ENCODE measurements at regions of chr6 and their contacts with region 1.

Region 1: GRCh38 chr6:111406200-111406721 is 76.8 kb downstream of the REV3L start:
- DNase-seq: peak; percentile 96
- ATAC-seq: peak; percentile 94
- H3K4me3 ChIP-seq: no peak overlapping the region
- H3K27ac ChIP-seq: peak overlapping the region; percentile 59
- H3K4me1 ChIP-seq: peaks cover 28% of the 10 kb centered on the region
- H3K27me3 ChIP-seq: no peaks in the 10 kb centered on the region
- CTCF ChIP-seq: no peak
- EP300 ChIP-seq: peak; percentile 98 to 100; a peak in 3 of 4 replicates
- POLR2A ChIP-seq: no peak
- RAD21 ChIP-seq: peak; percentile 37; the same call in 1 of the 2 replicates

Region 2: GRCh38 chr6:111388681-111389080 is 17.6 kb before region 1 on chr6:
- CTCF ChIA-PET with region 1: interaction called, 3 read pairs
- POLR2A ChIA-PET with region 1: no interaction called
- RAD21 ChIA-PET with region 1: no interaction called
- SMC1A ChIA-PET with region 1: interaction called, 14 read pairs
- in situ Hi-C with region 1: no loop called
- intact Hi-C with region 1: no loop called
- DNase-seq: no peak
- ATAC-seq: no peak
- H3K4me3 ChIP-seq: no peak overlapping the region
- H3K27ac ChIP-seq: no peak overlapping the region
- H3K4me1 ChIP-seq: no peaks in the 10 kb centered on the region
- H3K27me3 ChIP-seq: no peaks in the 10 kb centered on the region
- CTCF ChIP-seq: no peak
- EP300 ChIP-seq: no peak
- POLR2A ChIP-seq: no peak
- RAD21 ChIP-seq: no peak

Region 3: DNA sequence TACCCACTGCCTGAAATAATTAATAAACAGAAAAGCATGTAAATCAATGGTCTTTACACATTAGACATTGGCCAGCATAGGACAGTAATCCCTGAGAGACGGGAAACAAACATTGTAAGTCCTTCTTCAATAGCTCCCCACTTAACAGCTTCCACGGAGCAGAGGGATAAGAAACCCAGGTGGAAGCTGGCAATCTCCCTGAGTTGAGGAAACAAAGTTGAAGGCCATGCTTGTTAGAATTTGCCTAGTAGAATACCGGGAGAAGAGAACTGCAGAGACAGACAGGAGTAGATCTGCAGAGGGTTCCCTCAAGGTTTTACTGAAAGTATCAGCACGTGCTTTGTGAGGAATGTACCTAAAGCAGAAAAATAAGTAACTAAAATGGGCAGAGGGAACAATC is 42.9 kb after region 1 on chr6:
- CTCF ChIA-PET with region 1: no interaction called
- POLR2A ChIA-PET with region 1: no interaction called
- RAD21 ChIA-PET with region 1: no interaction called
- SMC1A ChIA-PET with region 1: no interaction called
- in situ Hi-C with region 1: no loop called
- intact Hi-C with region 1: no loop called
- DNase-seq: no peak
- ATAC-seq: no peak
- H3K4me3 ChIP-seq: no peak overlapping the region
- H3K27ac ChIP-seq: no peak overlapping the region
- H3K4me1 ChIP-seq: no peaks in the 10 kb centered on the region
- H3K27me3 ChIP-seq: no peaks in the 10 kb centered on the region
- CTCF ChIP-seq: no peak
- EP300 ChIP-seq: no peak
- POLR2A ChIP-seq: no peak
- RAD21 ChIP-seq: no peak

Region 4: DNA sequence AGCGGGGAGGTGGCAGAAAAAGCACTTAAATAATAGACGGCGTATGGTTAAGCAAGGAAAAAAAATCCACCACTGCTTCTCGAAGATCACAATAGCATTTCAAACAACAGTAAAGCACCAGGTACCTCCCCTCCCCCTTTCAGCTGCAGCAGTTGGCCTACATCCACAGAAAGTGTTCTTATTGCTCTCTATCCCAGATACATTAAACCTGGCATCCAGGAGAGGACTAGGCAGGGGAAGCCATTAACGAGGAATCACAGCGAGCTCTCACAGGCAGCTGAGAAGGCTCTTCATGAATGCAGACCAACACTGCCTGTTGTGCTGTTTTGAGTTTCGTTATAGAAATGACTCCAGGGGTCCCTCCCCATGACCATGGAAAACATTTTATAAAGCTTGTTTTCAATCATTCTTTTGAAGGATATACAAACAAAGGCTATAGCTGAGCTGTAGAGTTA is 455.2 kb after region 1 on chr6:
- CTCF ChIA-PET with region 1: no interaction called
- POLR2A ChIA-PET with region 1: no interaction called
- RAD21 ChIA-PET with region 1: no interaction called
- SMC1A ChIA-PET with region 1: no interaction called
- in situ Hi-C with region 1: no loop called
- intact Hi-C with region 1: no loop called
- DNase-seq: no peak
- ATAC-seq: no peak
- H3K4me3 ChIP-seq: no peak overlapping the region
- H3K27ac ChIP-seq: no peak overlapping the region
- H3K4me1 ChIP-seq: peaks cover 21% of the 10 kb centered on the region
- H3K27me3 ChIP-seq: no peaks in the 10 kb centered on the region
- CTCF ChIP-seq: no peak
- EP300 ChIP-seq: no peak
- POLR2A ChIP-seq: no peak
- RAD21 ChIP-seq: no peak